Activated CD4-positive, alpha-beta memory T cell treated with anti-CD3 and anti-CD28 coated beads for 36 hours (primary cell): ENCODE measurements at regions of chrX and their contacts with region 1.

Region 1: GRCh38 chrX:100413229-100413628 is 3.2 kb upstream of the PCDH19 start:
- DNase-seq: peak; percentile 30
- H3K4me3 Mint-ChIP-seq: no peak overlapping the region
- H3K27ac Mint-ChIP-seq: no peak overlapping the region
- H3K4me1 Mint-ChIP-seq: peaks cover 15% of the 10 kb centered on the region
- H3K27me3 Mint-ChIP-seq: peaks cover 30% of the 10 kb centered on the region

Region 2: GRCh38 chrX:99301990-99302389 is 1111.2 kb before region 1 on chrX:
- CTCF ChIA-PET with region 1: no interaction called
- POLR2A ChIA-PET with region 1: no interaction called
- intact Hi-C with region 1: loop called (anchors 5 kb)
- DNase-seq: no peak
- H3K4me3 Mint-ChIP-seq: no peak overlapping the region
- H3K27ac Mint-ChIP-seq: no peak overlapping the region
- H3K4me1 Mint-ChIP-seq: no peaks in the 10 kb centered on the region
- H3K27me3 Mint-ChIP-seq: no peaks in the 10 kb centered on the region

Region 3: DNA sequence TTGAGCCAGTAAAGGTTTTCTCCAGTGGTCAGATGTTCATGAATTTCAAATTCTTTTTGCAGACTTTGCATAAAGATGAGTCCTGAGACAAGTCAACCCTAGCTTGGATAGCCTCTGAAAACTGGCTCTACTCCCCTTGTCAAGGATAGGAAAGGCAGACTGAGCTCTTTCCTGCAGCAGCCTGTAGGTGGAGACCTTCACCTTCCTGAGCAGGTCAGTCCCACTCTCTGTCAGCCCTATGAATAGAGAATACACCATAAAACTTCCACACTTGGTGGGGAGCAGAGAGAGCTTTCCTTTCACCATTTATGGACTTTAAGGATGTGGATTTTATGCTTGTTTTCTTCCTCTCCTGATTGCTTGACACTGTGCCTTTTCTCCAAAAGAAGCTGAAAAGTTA is 45.1 kb before region 1 on chrX:
- CTCF ChIA-PET with region 1: interaction called, 7 read pairs
- POLR2A ChIA-PET with region 1: no interaction called
- intact Hi-C with region 1: loop called (anchors 5 kb)
- DNase-seq: no peak
- H3K4me3 Mint-ChIP-seq: no peak overlapping the region
- H3K27ac Mint-ChIP-seq: no peak overlapping the region
- H3K4me1 Mint-ChIP-seq: no peaks in the 10 kb centered on the region
- H3K27me3 Mint-ChIP-seq: no peaks in the 10 kb centered on the region

Region 4: DNA sequence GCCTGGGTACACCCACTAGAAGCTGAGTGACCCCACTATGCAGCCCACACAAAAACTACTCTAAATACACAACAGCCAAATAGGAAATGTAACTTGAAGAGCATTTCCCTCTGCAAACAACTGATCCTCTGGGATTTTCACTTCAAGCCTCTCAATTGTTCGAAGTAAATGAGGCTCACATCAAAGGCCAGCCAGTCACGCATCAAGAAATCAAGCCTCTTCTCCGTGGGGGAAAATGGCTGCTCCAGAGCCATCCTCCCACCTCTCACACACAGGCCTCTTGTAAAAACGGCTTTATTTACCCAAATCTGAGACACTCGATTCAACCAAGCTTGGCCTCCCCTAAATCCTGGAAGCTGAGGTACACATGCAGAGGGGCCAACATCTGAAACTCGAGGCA is 17.4 kb before region 1 on chrX:
- CTCF ChIA-PET with region 1: no interaction called
- POLR2A ChIA-PET with region 1: no interaction called
- intact Hi-C with region 1: no loop called
- DNase-seq: no peak
- H3K4me3 Mint-ChIP-seq: no peak overlapping the region
- H3K27ac Mint-ChIP-seq: no peak overlapping the region
- H3K4me1 Mint-ChIP-seq: no peaks in the 10 kb centered on the region
- H3K27me3 Mint-ChIP-seq: peaks cover 2% of the 10 kb centered on the region